ENCODE measurements at regions of chr11 and their contacts with region 1.

Region 1: GRCh38 chr11:14249121-14249963 is 109.6 kb downstream of the RRAS2 start:
- DNase-seq: peak in 2 of 3 donors; percentile 41 to 75
- ATAC-seq: peak; percentile 81
- H3K4me3 ChIP-seq: no peak overlapping the region
- H3K4me1 ChIP-seq: peaks cover 7% of the 10 kb centered on the region
- CTCF ChIP-seq: peak; percentile 80

Region 2: DNA sequence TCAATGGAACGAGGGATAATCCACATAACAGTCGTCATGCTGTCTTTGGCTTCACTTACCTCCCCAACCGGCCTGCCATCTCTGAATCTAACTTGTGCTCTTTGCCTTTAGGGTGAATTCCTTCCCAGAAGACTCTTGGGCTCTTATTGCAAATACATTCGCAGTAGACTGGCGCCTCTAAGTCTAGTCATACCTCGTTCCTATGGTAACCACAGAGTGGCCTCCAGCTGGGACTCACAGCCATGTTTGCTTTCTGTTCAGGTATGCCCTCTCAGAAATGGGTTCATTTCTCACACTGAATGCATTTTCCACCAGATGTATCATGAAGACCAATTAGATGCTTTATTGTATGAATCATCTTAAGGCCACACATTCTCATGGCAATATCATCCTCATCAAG is 468.2 kb before region 1 on chr11:
- intact Hi-C with region 1: loop called in 1 of 2 experiments (anchors 10 kb)
- DNase-seq: no peak
- ATAC-seq: no peak
- H3K4me3 ChIP-seq: no peak overlapping the region
- H3K4me1 ChIP-seq: no peaks in the 10 kb centered on the region
- CTCF ChIP-seq: no peak

Region 3: DNA sequence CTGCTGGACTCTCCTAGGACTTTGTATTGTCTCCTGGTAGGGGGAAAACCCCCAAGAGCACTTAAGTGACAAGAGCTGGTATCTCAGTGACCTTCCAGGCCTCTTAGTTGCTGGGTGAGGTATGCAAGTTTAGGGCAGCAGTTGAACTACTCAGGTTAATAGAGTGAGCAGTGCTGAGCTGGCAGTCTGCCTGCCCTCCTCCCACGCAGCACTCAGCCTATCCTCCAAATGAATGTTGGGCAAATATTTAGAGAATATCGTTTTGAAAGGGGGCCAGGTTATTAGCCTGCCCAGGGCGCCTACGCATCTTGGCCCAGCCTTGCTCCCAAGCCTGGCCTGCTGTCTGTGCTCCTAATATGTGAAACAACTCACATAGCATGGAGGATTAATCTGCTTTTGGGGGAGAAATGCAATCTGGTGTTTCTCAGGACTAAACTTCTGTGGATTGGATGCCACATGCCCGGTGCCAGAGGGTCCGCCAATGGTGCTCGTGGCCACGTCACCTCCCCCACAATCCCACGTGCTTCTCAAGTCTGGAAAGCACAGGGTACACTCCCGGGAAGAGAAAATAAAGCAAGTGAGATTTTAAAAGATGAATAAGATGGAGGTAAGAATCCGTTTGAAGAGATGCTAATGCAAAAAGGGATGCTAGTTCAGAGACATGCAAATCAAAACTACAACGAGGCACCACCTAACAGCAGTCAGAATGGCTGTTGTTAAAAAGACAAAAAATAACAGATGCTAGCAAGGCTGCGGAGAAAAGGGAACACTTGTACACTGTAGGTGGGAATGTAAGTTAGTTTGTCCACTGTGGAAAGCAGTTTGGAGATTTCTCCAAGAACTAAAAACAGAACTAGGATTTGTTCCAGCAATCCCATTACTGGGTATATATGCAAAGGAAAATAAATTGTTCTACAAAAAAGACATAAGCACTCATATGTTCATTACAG is 219.1 kb before region 1 on chr11:
- intact Hi-C with region 1: no loop called
- DNase-seq: peak; percentile 68 to 71 (median 71)
- ATAC-seq: peak; percentile 91
- H3K4me3 ChIP-seq: no peak overlapping the region
- H3K4me1 ChIP-seq: peaks cover 16% of the 10 kb centered on the region
- CTCF ChIP-seq: no peak

Region 4: GRCh38 chr11:14288189-14288935 is 39.0 kb after region 1 on chr11:
- intact Hi-C with region 1: no loop called
- DNase-seq: no peak
- ATAC-seq: peak; percentile 42
- H3K4me3 ChIP-seq: no peak overlapping the region
- H3K4me1 ChIP-seq: no peaks in the 10 kb centered on the region
- CTCF ChIP-seq: no peak

Measured in mucosa of descending colon (tissue), 3 donors.